Activated T-helper 2 cell treated with anti-CD3 and anti-CD28 coated beads, Interferon-gamma antibody, Interleukin-2, Interleukin-4, amounts not matched to agents 10 μg/mL and 5 μg/mL and 100 μg/mL, durations not matched to agents 14 hours and 24 hours and 36 hours (primary cell): ENCODE measurements at regions of chr1 and their contacts with region 1.

Region 1: DNA sequence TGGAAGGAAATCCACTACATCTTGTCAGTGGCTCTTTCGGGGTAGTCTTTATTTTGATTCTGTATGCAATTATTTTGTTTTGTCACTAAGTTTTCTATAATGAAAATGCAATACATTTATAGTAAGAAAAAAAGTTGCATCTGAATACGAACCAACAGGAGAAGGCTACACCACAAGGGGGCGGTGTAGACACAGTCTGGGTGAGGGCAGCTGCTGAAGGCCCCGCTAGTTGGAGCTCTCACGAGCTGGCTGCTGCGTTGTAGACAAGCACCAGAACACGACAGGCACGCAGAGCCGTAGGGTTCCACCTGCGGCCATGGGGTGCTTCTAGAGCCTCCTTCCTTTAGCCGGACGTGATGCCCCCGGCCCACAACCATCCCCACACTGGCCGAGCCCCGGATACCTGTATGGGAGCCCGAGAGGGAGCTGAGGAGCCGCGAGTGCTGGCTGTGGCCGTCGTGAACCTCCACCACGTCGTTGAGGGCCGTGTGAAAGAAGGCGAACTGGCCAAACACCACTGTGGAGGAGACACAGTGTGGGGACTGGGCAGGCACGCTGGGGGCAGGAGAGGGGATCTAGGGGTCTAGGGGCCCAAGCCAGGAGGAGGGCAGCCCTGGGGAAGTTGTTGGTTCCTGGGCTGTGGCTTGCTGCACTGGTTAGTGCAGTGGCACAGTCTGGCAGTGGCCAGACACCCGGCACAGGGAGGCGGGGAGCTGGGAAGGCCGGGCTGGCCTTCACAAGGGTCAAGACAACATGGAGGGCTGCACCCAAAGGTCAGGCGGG is 160.8 kb downstream of the ZSCAN20 start:
- DNase-seq: peak; percentile 73
- H3K4me3 Mint-ChIP-seq: no peak overlapping the region
- H3K27ac Mint-ChIP-seq: no peak overlapping the region
- H3K4me1 Mint-ChIP-seq: no peaks in the 10 kb centered on the region
- H3K27me3 Mint-ChIP-seq: peaks cover 16% of the 10 kb centered on the region

Region 2: GRCh38 chr1:34162852-34163766 is 529.9 kb after region 1 on chr1:
- intact Hi-C with region 1: loop called (anchors 5 kb)
- DNase-seq: peak; percentile 12
- H3K4me3 Mint-ChIP-seq: peak overlapping the region; percentile 30
- H3K27ac Mint-ChIP-seq: no peak overlapping the region
- H3K4me1 Mint-ChIP-seq: peaks cover 11% of the 10 kb centered on the region
- H3K27me3 Mint-ChIP-seq: peaks cover 63% of the 10 kb centered on the region